ENCODE measurements at regions of chr12 and their contacts with region 1.

Region 1: GRCh38 chr12:31728917-31729640 is at the start of gene AMN1:
- DNase-seq: peak; percentile 98 to 99
- ATAC-seq: peak; percentile 87 to 98 (median 92)
- H3K4me3 ChIP-seq: peak within 1 kb of the TSS; percentile 77
- H3K4me3 Mint-ChIP-seq: peak within 1 kb of the TSS; percentile 99
- H3K27ac ChIP-seq: peak within 1 kb of the TSS; percentile 95
- H3K27ac Mint-ChIP-seq: peak within 1 kb of the TSS; percentile 96 to 97
- H3K4me1 ChIP-seq: peaks cover 31% of the 10 kb centered on the region
- H3K4me1 Mint-ChIP-seq: peaks cover 35 to 49% of the 10 kb centered on the region in 2 donors
- H3K27me3 ChIP-seq: no peaks in the 10 kb centered on the region
- H3K27me3 Mint-ChIP-seq: no peaks in the 10 kb centered on the region
- CTCF ChIP-seq: no peak
- total RNA-seq, gene AMN1: 4.6 to 6.9 (median 6.3) TPM

Region 2: GRCh38 chr12:30754709-30755394 is 974.2 kb before region 1 on chr12 and contains the start of gene CAPRIN2:
- intact Hi-C with region 1: loop called (anchors 10 kb)
- DNase-seq: peak; percentile 90 to 95
- ATAC-seq: peak; percentile 87 to 95 (median 89)
- H3K4me3 ChIP-seq: peak within 1 kb of the TSS; percentile 59
- H3K4me3 Mint-ChIP-seq: peak within 1 kb of the TSS; percentile 94
- H3K27ac ChIP-seq: peak within 1 kb of the TSS; percentile 74
- H3K27ac Mint-ChIP-seq: peak within 1 kb of the TSS; percentile 82 to 87
- H3K4me1 ChIP-seq: peaks cover 16% of the 10 kb centered on the region
- H3K4me1 Mint-ChIP-seq: peaks cover 23 to 43% of the 10 kb centered on the region in 2 donors
- H3K27me3 ChIP-seq: no peaks in the 10 kb centered on the region
- H3K27me3 Mint-ChIP-seq: no peaks in the 10 kb centered on the region
- CTCF ChIP-seq: no peak
- total RNA-seq, gene CAPRIN2: 38.1 to 53.2 (median 38.7) TPM

Region 3: GRCh38 chr12:31325877-31326631 is 403.0 kb before region 1 on chr12 and contains the start of gene SINHCAF:
- intact Hi-C with region 1: loop called (anchors 10 kb)
- DNase-seq: peak; percentile 96 to 99
- ATAC-seq: peak; percentile 60 to 81 (median 71)
- H3K4me3 ChIP-seq: peak within 1 kb of the TSS; percentile 74
- H3K4me3 Mint-ChIP-seq: peak within 1 kb of the TSS; percentile 99
- H3K27ac ChIP-seq: peak within 1 kb of the TSS; percentile 94
- H3K27ac Mint-ChIP-seq: peak within 1 kb of the TSS; percentile 91 to 96
- H3K4me1 ChIP-seq: peaks cover 9% of the 10 kb centered on the region
- H3K4me1 Mint-ChIP-seq: peaks cover 20 to 27% of the 10 kb centered on the region in 2 donors
- H3K27me3 ChIP-seq: no peaks in the 10 kb centered on the region
- H3K27me3 Mint-ChIP-seq: no peaks in the 10 kb centered on the region
- CTCF ChIP-seq: no peak
- total RNA-seq, gene SINHCAF: 40.4 to 55.0 (median 41.0) TPM

Region 4: DNA sequence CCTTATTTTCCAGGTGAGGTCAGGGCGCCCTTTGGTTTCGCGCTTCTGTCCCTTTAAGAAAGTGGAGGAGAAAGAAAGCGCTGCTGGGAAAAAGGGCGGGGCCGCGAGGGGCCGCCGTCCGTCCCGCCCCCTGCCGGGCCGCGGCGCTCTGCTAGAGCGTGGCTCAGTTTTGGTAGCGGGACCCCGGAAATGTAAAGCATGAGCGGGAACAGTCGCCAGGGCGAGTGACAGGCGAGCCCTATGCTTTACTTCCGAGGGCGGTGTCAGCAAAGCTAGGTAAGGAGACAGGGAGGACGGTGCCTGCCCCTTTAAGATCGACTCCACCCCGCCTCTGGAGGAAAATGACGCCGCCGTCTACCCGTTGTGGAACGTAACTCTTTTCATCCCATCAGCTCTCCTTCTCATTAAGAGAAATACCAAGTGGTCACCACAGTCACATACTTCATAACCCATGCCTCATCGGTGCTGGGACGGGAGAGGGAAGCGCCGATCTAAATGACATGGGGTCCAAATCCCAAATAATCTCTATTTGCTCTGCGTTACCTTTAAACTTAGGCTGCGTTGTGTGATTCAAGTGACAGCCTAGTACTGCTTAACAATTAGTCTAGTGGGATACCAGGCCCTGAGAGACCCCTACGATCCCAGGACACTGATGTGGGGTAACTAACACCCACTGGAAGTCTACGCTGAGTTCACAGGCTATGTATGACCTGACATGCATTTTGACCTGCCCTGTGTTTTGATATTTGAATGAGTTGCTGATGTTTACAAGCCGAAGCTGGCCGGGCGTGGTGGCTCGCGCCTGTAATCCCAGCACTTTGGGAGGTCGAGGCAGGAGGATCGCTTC is 69.8 kb before region 1 on chr12 and contains the start of gene ETFBKMT:
- intact Hi-C with region 1: loop called (anchors 2 kb)
- DNase-seq: peak; percentile 80 to 96
- ATAC-seq: peak; percentile 91 to 96 (median 94)
- H3K4me3 ChIP-seq: peak within 1 kb of the TSS; percentile 48
- H3K4me3 Mint-ChIP-seq: peak within 1 kb of the TSS; percentile 93
- H3K27ac ChIP-seq: peak within 1 kb of the TSS; percentile 84
- H3K27ac Mint-ChIP-seq: peak within 1 kb of the TSS; percentile 91 to 93
- H3K4me1 ChIP-seq: peaks cover 12% of the 10 kb centered on the region
- H3K4me1 Mint-ChIP-seq: peaks cover 6 to 12% of the 10 kb centered on the region in 2 donors
- H3K27me3 ChIP-seq: no peaks in the 10 kb centered on the region
- H3K27me3 Mint-ChIP-seq: no peaks in the 10 kb centered on the region
- CTCF ChIP-seq: peak; percentile 19
- total RNA-seq, gene ETFBKMT: 1.2 to 1.9 (median 1.2) TPM

Region 5: DNA sequence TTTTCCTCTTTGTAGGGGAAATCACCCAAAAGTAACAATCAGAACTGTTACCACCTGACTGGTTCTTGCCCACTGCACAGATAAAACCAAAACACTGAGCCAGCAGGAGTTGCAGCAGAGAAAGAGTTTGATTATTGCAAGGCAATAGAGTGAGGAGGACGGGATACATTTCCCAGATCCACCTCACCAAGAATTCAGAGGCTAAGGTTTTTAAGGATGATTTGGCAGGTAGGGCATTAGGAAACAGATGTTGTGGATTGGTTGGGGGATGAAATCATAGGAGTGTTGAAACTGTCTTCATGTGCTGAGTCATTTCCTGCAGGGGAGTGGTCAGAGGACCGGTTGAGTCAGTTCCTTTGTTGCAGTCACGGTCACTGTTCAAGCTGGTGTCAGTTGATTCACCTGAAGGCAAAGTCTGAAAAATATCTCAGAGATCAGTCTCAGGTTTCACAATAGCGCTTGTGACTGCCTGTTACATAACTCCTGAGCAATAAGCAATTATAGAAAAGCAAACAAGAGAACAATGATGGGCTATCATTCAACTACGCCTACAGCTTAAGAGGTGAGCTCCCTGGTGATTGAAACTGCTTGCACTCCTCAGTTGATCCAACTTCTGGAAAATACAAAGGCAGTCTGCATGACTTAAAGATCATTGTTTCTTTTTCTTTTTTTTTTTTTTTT is 20.1 kb after region 1 on chr12:
- intact Hi-C with region 1: loop called (anchors 1 kb)
- DNase-seq: peak; percentile 39 to 67
- ATAC-seq: peak; percentile 95 to 97 (median 95)
- H3K4me3 ChIP-seq: no peak overlapping the region
- H3K4me3 Mint-ChIP-seq: peak overlapping the region; percentile 67
- H3K27ac ChIP-seq: peak overlapping the region; percentile 35
- H3K27ac Mint-ChIP-seq: peak overlapping the region; percentile 24 to 87
- H3K4me1 ChIP-seq: peaks cover 50% of the 10 kb centered on the region
- H3K4me1 Mint-ChIP-seq: peaks cover 26 to 42% of the 10 kb centered on the region in 2 donors
- H3K27me3 ChIP-seq: no peaks in the 10 kb centered on the region
- H3K27me3 Mint-ChIP-seq: no peaks in the 10 kb centered on the region
- CTCF ChIP-seq: no peak

Region 6: DNA sequence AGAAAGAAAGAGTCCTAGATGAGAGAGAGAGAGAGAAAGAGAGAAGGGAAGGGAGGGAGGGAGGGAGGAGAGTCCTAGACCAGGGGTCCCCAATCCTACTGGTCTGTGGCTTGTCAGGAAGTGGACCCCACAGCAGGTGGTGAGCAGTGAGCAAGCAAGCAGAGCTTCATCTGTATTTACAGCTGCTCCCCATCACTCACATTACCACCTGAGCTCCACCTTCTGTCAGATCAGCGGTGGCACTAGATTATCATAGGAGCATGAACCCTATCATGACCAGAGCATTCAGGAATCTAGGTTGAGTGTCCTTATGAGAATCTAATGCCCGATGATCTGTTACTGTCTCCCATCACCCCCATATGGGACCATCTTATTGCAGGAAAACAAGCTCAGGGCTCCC is 39.0 kb after region 1 on chr12:
- intact Hi-C with region 1: no loop called
- DNase-seq: peak in 1 of 2 donors; percentile 22
- ATAC-seq: no peak
- H3K4me3 ChIP-seq: no peak overlapping the region
- H3K4me3 Mint-ChIP-seq: no peak overlapping the region
- H3K27ac ChIP-seq: no peak overlapping the region
- H3K27ac Mint-ChIP-seq: peak overlapping the region in 1 of 2 donors; percentile 22
- H3K4me1 ChIP-seq: no peaks in the 10 kb centered on the region
- H3K4me1 Mint-ChIP-seq: peaks cover 0 to 10% of the 10 kb centered on the region in 2 donors
- H3K27me3 ChIP-seq: no peaks in the 10 kb centered on the region
- H3K27me3 Mint-ChIP-seq: no peaks in the 10 kb centered on the region
- CTCF ChIP-seq: no peak

Region 7: GRCh38 chr12:31790759-31791158 is 61.7 kb after region 1 on chr12:
- intact Hi-C with region 1: loop called (anchors 1 kb)
- DNase-seq: no peak
- ATAC-seq: peak; percentile 56 to 61 (median 61)
- H3K4me3 ChIP-seq: no peak overlapping the region
- H3K4me3 Mint-ChIP-seq: peak overlapping the region; percentile 81
- H3K27ac ChIP-seq: no peak overlapping the region
- H3K27ac Mint-ChIP-seq: peak overlapping the region; percentile 85 to 86
- H3K4me1 ChIP-seq: peaks cover 16% of the 10 kb centered on the region
- H3K4me1 Mint-ChIP-seq: peaks cover 30 to 34% of the 10 kb centered on the region in 2 donors
- H3K27me3 ChIP-seq: no peaks in the 10 kb centered on the region
- H3K27me3 Mint-ChIP-seq: no peaks in the 10 kb centered on the region
- CTCF ChIP-seq: no peak

Region 8: DNA sequence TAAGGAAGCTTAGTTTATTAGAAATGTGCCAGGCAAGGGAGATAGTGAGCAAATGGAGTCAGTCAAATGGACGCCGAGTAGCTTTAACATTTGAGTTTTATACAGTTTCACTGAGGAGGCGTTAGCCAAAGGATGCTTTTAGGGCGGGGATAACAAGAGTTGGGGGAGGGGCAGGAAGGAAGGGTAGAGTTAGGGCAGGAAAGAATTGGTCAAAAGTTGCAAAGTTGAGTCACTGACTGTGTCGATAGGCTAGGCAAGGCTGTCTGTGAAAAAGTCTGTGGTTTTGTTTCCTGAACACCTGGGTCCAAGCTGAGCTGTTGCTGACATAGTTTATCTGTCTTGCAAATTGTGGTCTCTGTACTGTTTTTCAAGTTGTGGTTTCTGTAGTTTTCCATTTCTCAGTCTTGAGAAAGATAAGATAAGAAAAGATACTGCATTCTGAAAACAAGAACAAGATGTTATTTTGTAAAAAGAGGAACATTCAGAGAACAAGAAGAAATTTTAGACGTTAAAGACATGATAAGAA is 167.5 kb after region 1 on chr12:
- intact Hi-C with region 1: loop called (anchors 1 kb)
- DNase-seq: peak; percentile 70 to 96
- ATAC-seq: peak; percentile 88 to 99 (median 90)
- H3K4me3 ChIP-seq: no peak overlapping the region
- H3K4me3 Mint-ChIP-seq: peak overlapping the region; percentile 90
- H3K27ac ChIP-seq: peak overlapping the region; percentile 91
- H3K27ac Mint-ChIP-seq: peak overlapping the region; percentile 86 to 98
- H3K4me1 ChIP-seq: peaks cover 76% of the 10 kb centered on the region
- H3K4me1 Mint-ChIP-seq: peaks cover 66 to 74% of the 10 kb centered on the region in 2 donors
- H3K27me3 ChIP-seq: no peaks in the 10 kb centered on the region
- H3K27me3 Mint-ChIP-seq: no peaks in the 10 kb centered on the region
- CTCF ChIP-seq: no peak

Measured in natural killer cell (primary cell).